Sigmoid colon (tissue), 7 donors: ENCODE measurements at regions of chr12 and their contacts with region 1.

Region 1: GRCh38 chr12:80412369-80412953 is 31.6 kb upstream of the PTPRQ start:
- DNase-seq: no peak
- H3K4me3 ChIP-seq: no peak overlapping the region
- H3K27ac ChIP-seq: no peak overlapping the region
- H3K4me1 ChIP-seq: no peaks in the 10 kb centered on the region
- H3K27me3 ChIP-seq: no peaks in the 10 kb centered on the region
- CTCF ChIP-seq: peak; percentile 11 to 82 (median 42)
- EP300 ChIP-seq: no peak
- POLR2A ChIP-seq: no peak

Region 2: DNA sequence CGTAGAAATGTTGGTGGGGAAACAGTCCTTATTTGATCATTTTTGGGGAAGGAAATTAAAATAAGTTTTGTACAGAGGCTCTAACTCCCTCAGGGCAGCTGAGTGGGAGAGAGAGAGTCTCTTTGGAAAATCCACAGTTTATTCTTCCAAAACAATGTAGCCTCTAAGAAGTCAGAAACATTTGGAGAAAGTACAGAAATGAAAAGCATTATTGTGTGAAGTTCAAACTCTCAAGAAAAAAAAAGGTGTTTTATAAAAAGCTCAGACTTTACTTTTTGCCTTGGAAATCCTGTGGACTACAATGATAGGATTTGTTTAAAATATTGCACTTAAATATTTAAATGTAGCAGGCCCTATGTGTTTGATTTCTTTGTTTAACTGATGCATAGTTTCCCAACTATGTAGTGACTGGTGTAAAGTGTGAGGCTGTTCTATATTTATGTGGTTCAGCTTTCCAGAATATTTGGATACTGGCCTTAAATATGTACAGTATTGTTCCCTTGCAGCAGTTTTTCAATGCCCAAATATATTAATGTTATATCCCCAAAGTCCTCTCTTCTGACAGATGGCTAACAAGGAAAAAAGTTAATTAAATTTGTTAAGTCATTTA is 395.1 kb before region 1 on chr12:
- intact Hi-C with region 1: no loop called
- DNase-seq: no peak
- H3K4me3 ChIP-seq: peak overlapping the region in 1 of 4 donors; percentile 7
- H3K27ac ChIP-seq: peak overlapping the region; percentile 70 to 83 (median 78)
- H3K4me1 ChIP-seq: peaks cover 0 to 37% (median 25%) of the 10 kb centered on the region in 4 donors
- H3K27me3 ChIP-seq: no peaks in the 10 kb centered on the region
- CTCF ChIP-seq: no peak
- EP300 ChIP-seq: no peak
- POLR2A ChIP-seq: no peak

Region 3: DNA sequence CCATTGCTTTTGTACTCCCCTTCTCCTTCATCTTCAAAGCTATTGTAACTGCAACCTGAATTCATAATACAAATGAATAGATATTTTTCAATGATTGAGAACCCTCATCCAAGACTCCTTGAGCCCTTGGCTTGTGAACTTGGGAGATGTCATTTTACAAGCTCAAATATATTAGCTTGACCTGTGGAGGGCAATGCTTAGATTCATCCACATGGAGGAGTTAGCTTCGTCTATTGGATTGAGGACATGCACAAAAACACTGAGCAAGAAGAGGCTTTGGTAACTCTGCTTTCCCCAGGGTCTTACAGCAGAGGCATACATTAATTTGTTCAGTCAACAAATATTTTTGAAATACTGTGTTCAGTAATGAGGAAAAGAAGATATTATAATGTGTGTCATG is 212.1 kb before region 1 on chr12:
- intact Hi-C with region 1: no loop called
- DNase-seq: no peak
- H3K4me3 ChIP-seq: no peak overlapping the region
- H3K27ac ChIP-seq: no peak overlapping the region
- H3K4me1 ChIP-seq: peaks cover 0 to 2% (median 0%) of the 10 kb centered on the region in 4 donors
- H3K27me3 ChIP-seq: no peaks in the 10 kb centered on the region
- CTCF ChIP-seq: no peak
- EP300 ChIP-seq: no peak
- POLR2A ChIP-seq: no peak

Region 4: GRCh38 chr12:80373666-80374065 is 38.8 kb before region 1 on chr12:
- intact Hi-C with region 1: no loop called
- DNase-seq: no peak
- H3K4me3 ChIP-seq: no peak overlapping the region
- H3K27ac ChIP-seq: no peak overlapping the region
- H3K4me1 ChIP-seq: no peaks in the 10 kb centered on the region
- H3K27me3 ChIP-seq: no peaks in the 10 kb centered on the region
- CTCF ChIP-seq: no peak
- EP300 ChIP-seq: no peak
- POLR2A ChIP-seq: no peak

Region 5: DNA sequence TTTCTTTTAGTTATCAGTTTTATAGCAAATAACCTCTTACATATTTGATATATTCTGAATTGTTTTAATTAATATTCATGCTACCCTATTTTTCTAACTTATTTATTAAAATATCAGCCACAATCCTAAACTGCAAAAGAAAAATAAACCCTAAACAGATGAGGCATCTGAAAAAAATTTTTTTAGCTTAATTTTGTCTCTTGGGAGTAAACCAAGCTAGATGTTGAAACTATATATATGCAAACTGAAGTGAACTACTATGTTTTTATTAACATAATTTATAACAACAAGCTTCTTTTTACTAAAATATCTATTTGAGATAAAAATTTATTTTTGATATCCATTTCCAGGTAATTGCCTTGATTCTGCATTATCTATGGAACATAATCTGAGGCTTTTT is 119.2 kb after region 1 on chr12:
- intact Hi-C with region 1: no loop called
- DNase-seq: no peak
- H3K4me3 ChIP-seq: no peak overlapping the region
- H3K27ac ChIP-seq: no peak overlapping the region
- H3K4me1 ChIP-seq: no peaks in the 10 kb centered on the region
- H3K27me3 ChIP-seq: no peaks in the 10 kb centered on the region
- CTCF ChIP-seq: no peak
- EP300 ChIP-seq: no peak
- POLR2A ChIP-seq: no peak

Region 6: DNA sequence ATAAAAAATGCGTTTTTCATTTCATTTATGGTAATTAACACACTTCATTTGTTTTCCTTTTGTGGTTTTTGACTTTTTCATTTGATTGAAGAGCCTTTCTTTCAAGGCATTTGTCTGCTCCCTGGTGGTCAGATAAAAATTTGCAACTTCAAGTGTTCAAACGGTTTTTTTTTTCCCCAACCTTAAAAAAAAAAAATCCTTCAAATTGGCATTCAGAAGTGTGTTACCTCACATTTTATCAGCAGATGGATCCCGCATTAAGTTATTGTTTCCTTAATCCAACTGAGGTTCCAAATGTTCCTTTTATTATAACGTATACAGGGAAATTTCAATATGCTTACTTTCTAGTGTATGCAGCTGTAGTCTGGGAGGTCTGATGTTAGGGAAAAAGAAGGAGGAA is 351.4 kb after region 1 on chr12:
- intact Hi-C with region 1: loop called (anchors 10 kb)
- DNase-seq: no peak
- H3K4me3 ChIP-seq: no peak overlapping the region
- H3K27ac ChIP-seq: no peak overlapping the region
- H3K4me1 ChIP-seq: no peaks in the 10 kb centered on the region
- H3K27me3 ChIP-seq: no peaks in the 10 kb centered on the region
- CTCF ChIP-seq: peak in 2 of 4 experiments; percentile 28 to 44
- EP300 ChIP-seq: no peak
- POLR2A ChIP-seq: no peak

Region 7: DNA sequence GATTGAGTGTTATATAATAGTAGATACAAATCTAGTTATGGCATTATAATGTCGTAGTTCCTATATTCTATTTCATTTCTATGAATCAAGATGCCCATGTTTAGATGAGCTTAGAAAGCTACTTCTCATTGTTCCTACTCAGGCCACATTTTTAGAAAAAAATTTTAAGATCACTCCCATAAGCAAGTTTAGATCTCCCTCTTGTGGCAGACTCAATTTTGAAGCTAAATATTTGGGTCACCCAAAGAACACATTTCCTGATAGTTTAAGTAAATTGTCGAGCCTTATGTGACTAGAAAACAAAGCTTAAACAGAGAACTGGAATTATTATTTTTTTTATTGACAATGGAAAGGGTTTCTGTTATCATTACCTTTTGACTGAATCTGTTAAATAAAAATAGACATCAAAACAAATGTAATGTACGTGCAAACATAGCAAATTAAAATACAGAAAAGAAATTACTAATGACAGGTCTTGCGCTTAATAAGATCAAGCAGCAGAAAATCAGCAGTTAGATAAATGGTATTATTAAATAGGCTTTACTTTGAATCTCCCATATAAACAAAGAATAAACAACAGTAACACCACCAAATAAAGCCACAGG is 845.6 kb after region 1 on chr12:
- intact Hi-C with region 1: loop called (anchors 10 kb)
- DNase-seq: no peak
- H3K4me3 ChIP-seq: peak overlapping the region in 1 of 4 donors; percentile 2
- H3K27ac ChIP-seq: no peak overlapping the region
- H3K4me1 ChIP-seq: no peaks in the 10 kb centered on the region
- H3K27me3 ChIP-seq: no peaks in the 10 kb centered on the region
- CTCF ChIP-seq: peak; percentile 16 to 48 (median 26)
- EP300 ChIP-seq: no peak
- POLR2A ChIP-seq: no peak

Region 8: GRCh38 chr12:82358200-82359114 is 1946.0 kb after region 1 on chr12 and contains the starts of genes CCDC59 and METTL25:
- intact Hi-C with region 1: loop called (anchors 10 kb)
- DNase-seq: peak; percentile 98
- H3K4me3 ChIP-seq: peak within 1 kb of the TSS; percentile 63 to 88 (median 70)
- H3K27ac ChIP-seq: peak within 1 kb of the TSS; percentile 85 to 93 (median 88)
- H3K4me1 ChIP-seq: peaks cover 0 to 51% (median 35%) of the 10 kb centered on the region in 4 donors
- H3K27me3 ChIP-seq: no peaks in the 10 kb centered on the region
- CTCF ChIP-seq: peak; percentile 94 to 100 (median 98)
- EP300 ChIP-seq: peak in 1 of 4 donors; percentile 69
- POLR2A ChIP-seq: peak; percentile 45 to 67
- total RNA-seq, gene CCDC59: 60.4 to 91.8 (median 82.6) TPM
- total RNA-seq, gene METTL25: 22.7 to 59.9 (median 41.8) TPM